Panc1 (cell line): ENCODE measurements at regions of chr11 and their contacts with region 1.

Region 1: GRCh38 chr11:65134386-65135253 is at the start of gene SYVN1:
- DNase-seq: peak; percentile 95
- ATAC-seq: peak; percentile 93
- H3K4me3 ChIP-seq: peak within 1 kb of the TSS; percentile 91 to 96
- H3K27ac ChIP-seq: peak within 1 kb of the TSS; percentile 99
- H3K4me1 ChIP-seq: peaks cover 16% of the 10 kb centered on the region
- H3K27me3 ChIP-seq: no peaks in the 10 kb centered on the region
- CTCF ChIP-seq: no peak
- total RNA-seq, gene SYVN1: 64.3 TPM

Region 2: DNA sequence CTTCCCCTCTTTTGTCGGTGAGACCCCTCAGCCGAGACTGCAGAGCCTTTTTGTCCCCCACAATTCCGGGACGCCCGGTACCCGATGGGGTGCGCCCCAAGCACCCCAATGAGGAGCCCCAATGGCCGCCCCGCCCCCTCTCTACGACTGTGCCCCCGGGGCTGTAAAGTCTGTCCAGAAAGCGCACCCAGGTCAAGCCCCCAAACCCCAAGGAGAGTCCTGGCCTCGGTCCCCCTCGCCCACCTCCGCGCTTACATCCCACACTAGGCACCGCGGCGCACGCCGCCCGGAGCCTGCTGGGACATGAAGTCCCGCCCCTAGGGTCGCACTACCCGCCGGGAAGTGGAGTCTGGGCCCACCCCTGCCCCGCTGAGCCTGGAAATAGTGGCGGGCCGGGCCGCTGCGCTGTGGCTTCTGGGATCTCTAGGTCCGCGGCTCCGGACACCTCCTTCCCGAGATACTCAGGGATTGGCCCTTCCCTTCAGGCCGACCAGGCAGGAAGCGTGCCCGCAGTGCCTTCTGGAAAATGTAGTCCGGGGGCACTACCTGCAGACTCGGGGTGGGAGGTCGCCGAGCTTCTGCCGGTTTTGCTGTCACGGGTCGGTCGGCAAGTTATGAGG is 324.2 kb before region 1 on chr11 and contains the start of gene MEN1:
- CTCF ChIA-PET with region 1: no interaction called
- POLR2A ChIA-PET with region 1: no interaction called
- in situ Hi-C with region 1: no loop called
- intact Hi-C with region 1: no loop called
- DNase-seq: peak; percentile 81
- ATAC-seq: peak; percentile 100
- H3K4me3 ChIP-seq: peak within 1 kb of the TSS; percentile 73 to 79
- H3K27ac ChIP-seq: peak within 1 kb of the TSS; percentile 81
- H3K4me1 ChIP-seq: peaks cover 5% of the 10 kb centered on the region; the same call in 1 of the 2 replicates
- H3K27me3 ChIP-seq: no peaks in the 10 kb centered on the region
- CTCF ChIP-seq: no peak
- total RNA-seq, gene MEN1: 54.5 TPM

Region 3: DNA sequence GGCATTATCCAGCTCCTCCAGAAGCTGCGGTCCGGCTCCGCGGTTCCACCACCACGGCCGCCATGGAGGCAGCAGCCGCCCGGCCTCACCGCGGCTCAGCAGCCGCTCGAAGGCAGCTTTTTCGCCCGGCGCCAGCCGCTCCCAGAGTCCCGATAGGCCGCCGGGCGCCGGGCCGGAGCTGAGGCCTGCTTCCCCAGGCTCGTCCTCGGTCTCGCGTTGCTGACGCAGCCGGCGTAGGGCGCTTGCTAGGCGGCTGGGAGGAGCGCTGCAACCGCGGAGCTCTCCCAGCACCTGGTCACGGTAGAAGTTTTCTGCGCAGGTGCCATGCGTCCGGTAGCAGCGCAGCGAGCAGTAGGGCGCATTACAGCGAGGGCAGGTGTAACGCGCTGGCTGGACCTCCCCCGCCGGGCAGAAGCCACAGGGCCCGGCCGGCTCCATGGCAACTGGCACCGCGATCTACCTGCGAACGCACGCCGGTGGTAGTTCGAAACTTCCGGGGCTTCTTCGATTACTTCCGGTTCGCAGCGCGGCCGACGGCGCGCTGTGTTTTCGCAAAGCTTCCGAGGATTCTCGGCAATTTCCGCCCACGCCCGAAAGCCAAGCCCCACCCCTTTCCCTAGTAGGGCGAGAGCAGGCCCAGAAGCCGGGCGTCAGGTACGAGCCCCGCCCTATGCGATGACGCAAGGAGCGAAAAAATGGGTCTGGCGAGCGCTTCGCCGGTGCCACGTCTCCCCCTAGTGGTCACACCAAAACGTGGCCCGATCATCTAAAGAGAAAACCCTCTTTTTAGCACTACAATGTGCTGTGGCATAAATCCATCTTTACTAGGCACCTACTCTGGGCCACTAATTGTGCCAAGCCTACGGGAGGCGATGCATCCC is 17.2 kb before region 1 on chr11 and contains the start of gene ZNHIT2:
- CTCF ChIA-PET with region 1: no interaction called
- POLR2A ChIA-PET with region 1: interaction called, 10 read pairs
- in situ Hi-C with region 1: no loop called
- intact Hi-C with region 1: no loop called
- DNase-seq: peak; percentile 99
- ATAC-seq: peak; percentile 77
- H3K4me3 ChIP-seq: peak within 1 kb of the TSS; percentile 70 to 78
- H3K27ac ChIP-seq: peak within 1 kb of the TSS; percentile 89
- H3K4me1 ChIP-seq: peaks cover 33% of the 10 kb centered on the region
- H3K27me3 ChIP-seq: no peaks in the 10 kb centered on the region
- CTCF ChIP-seq: peak; percentile 99
- total RNA-seq, gene ZNHIT2: 27.1 TPM

Region 4: DNA sequence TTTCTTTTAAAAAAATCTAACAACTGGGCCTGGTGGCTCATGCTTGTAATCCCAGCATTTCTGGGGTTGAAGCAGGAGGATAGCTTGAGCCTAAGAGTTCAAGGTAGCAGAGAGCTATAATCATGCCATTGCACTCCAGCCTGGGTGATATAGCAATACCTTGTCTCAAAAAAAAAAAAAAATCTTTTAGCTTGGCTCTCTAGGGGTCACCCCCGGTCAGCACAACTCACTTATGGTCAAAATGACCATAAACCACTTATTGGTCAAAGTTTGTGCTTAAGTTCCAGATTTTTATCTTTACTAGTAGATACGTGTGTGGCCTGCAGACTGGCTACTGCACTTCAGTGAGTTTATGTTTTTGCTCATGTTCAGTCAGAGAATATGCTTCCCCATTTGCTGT is 29.1 kb after region 1 on chr11:
- CTCF ChIA-PET with region 1: no interaction called
- POLR2A ChIA-PET with region 1: no interaction called
- in situ Hi-C with region 1: no loop called
- intact Hi-C with region 1: no loop called
- DNase-seq: no peak
- ATAC-seq: no peak
- H3K4me3 ChIP-seq: no peak overlapping the region
- H3K27ac ChIP-seq: no peak overlapping the region
- H3K4me1 ChIP-seq: 0 out of 2 replicates have a peak, but pooled peaks cover 7% of the 10 kb centered on the region
- H3K27me3 ChIP-seq: no peaks in the 10 kb centered on the region
- CTCF ChIP-seq: no peak

Region 5: GRCh38 chr11:65180877-65181568 is 46.4 kb after region 1 on chr11:
- CTCF ChIA-PET with region 1: interaction called, 4 read pairs
- POLR2A ChIA-PET with region 1: no interaction called
- in situ Hi-C with region 1: no loop called
- intact Hi-C with region 1: loop called (anchors 10 kb)
- DNase-seq: no peak
- ATAC-seq: peak; percentile 83
- H3K4me3 ChIP-seq: peak overlapping the region; percentile 79 to 95
- H3K27ac ChIP-seq: peak overlapping the region; percentile 82
- H3K4me1 ChIP-seq: peaks cover 16% of the 10 kb centered on the region
- H3K27me3 ChIP-seq: no peaks in the 10 kb centered on the region
- CTCF ChIP-seq: peak; percentile 90